ENCODE measurements at regions of chr9 and their contacts with region 1.

Region 1: DNA sequence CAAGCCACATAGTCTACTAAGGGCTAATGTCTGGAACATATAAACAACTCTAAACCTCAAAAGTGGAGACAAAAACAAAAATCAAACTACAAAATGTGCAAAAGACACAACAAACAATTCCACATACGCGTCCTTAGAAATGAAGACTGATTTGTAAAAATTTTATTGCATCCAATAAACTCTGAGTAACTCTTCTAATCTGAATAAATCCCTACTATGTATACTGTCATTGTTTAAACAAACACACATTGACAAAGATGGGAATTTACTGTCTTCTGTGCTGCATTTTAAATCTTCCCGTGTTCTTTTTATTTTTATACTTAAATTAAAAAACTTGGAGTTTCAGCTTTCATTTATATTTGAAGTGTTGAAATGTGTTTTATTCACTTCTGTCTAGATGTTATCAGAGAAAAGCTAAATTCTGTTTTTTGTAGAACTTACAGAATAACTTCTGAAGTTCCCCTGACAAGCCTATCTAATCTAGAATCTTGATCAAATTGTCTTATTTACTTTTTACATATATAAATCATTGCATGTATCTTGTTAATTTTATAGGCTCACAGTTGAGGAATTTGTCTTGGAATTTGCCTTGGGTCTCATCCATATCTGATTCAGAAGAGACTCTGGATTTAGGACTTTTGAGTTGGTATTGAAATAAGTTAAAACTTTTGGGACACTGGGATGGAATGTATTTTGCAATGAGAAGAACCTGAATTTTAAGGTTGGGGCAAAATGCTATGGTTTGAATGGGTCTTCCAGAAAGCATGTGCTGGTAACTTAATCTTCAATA is 2064.4 kb upstream of the C9orf72 start:
- DNase-seq: no peak
- ATAC-seq: no peak
- H3K4me3 ChIP-seq: no peak overlapping the region
- H3K27ac ChIP-seq: no peak overlapping the region
- H3K4me1 ChIP-seq: no peaks in the 10 kb centered on the region
- H3K27me3 ChIP-seq: no peaks in the 10 kb centered on the region
- CTCF ChIP-seq: no peak
- POLR2A ChIP-seq: no peak
- RAD21 ChIP-seq: no peak

Region 2: DNA sequence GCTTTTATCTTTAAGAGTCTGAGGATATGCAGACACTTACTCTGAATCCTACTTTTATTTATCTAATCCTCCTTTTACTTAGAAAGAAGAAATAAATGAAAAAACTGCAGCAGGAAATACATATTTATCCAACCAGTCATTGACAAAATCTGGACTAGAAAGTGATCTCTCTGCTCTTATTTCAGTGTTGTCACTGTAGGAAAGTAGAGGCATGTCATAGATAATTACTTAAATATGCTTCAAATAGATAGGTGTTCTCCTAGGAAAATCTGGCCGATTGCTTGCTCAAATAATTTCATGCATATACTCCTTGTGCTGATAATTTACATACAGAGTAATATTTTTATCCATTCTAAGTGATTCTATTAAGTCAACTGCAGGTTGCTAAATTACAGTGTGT is 62.4 kb before region 1 on chr9:
- CTCF ChIA-PET with region 1: no interaction called
- POLR2A ChIA-PET with region 1: no interaction called
- dilution Hi-C with region 1: no loop called
- in situ Hi-C with region 1: no loop called
- intact Hi-C with region 1: loop called (anchors 10 kb)
- DNase-seq: no peak
- ATAC-seq: no peak
- H3K4me3 ChIP-seq: no peak overlapping the region
- H3K27ac ChIP-seq: no peak overlapping the region
- H3K4me1 ChIP-seq: no peaks in the 10 kb centered on the region
- H3K27me3 ChIP-seq: no peaks in the 10 kb centered on the region
- CTCF ChIP-seq: no peak
- POLR2A ChIP-seq: no peak
- RAD21 ChIP-seq: no peak

Region 3: DNA sequence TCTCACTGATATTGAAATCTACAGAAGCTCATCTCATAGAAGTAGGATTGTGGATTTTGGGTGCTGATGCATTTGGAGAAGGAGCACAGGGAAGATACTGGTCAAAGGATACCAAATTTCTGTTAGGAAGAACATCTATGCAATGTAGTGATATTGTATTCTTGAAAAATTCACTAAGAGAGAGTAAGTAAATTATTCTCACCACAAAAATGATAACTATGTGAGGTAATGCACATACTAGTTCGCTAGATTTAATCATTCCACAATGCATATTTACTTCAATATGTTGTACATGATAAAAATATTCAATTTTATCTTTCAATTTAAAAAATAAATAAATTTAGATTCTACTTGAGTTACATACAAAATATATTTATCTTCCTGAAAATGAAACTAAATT is 23.9 kb before region 1 on chr9:
- CTCF ChIA-PET with region 1: no interaction called
- POLR2A ChIA-PET with region 1: no interaction called
- dilution Hi-C with region 1: no loop called
- in situ Hi-C with region 1: no loop called
- intact Hi-C with region 1: no loop called
- DNase-seq: no peak
- ATAC-seq: no peak
- H3K4me3 ChIP-seq: no peak overlapping the region
- H3K27ac ChIP-seq: no peak overlapping the region
- H3K4me1 ChIP-seq: no peaks in the 10 kb centered on the region
- H3K27me3 ChIP-seq: no peaks in the 10 kb centered on the region
- CTCF ChIP-seq: no peak
- POLR2A ChIP-seq: no peak
- RAD21 ChIP-seq: no peak

Region 4: DNA sequence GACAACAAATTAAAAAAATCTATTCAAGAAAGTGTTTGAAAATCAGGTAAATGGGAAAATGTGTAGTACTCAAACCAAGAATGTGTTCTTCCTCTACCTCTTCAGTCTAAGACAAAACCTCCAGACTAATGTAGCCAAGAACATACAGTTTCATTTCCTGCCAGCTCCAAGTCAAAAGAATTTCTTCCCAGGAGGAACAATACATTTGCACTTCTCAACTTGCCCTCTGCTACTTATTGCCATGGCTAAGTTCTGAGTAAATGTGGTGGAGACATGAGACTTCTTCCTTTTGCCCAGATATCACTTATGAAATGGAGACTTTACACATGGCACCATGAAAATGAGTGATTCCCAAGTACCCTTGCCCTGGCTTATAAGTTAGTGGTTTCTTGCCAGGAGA is 47.9 kb after region 1 on chr9:
- CTCF ChIA-PET with region 1: no interaction called
- POLR2A ChIA-PET with region 1: no interaction called
- dilution Hi-C with region 1: no loop called
- in situ Hi-C with region 1: no loop called
- intact Hi-C with region 1: loop called (anchors 10 kb)
- DNase-seq: no peak
- ATAC-seq: no peak
- H3K4me3 ChIP-seq: no peak overlapping the region
- H3K27ac ChIP-seq: no peak overlapping the region
- H3K4me1 ChIP-seq: no peaks in the 10 kb centered on the region
- H3K27me3 ChIP-seq: no peaks in the 10 kb centered on the region
- CTCF ChIP-seq: no peak
- POLR2A ChIP-seq: no peak
- RAD21 ChIP-seq: no peak

Region 5: DNA sequence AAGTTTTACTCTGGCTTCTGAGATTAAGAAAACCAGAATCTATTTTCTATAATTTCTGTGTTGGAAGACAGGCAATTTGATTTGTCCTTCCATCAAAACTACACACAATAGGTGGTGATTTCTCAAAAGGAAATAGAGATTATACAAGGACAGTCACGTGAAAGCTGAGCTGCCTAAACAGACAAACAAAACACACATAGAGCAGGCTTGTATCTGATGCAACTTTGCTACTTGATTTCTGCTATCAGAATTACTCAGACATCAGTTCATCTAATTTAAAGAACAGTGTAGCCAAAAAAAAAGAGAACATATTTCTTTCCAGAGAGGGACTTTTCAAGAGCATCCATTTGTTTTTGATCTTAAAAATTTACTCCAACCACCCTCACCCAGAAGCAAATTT is 63.9 kb after region 1 on chr9:
- CTCF ChIA-PET with region 1: no interaction called
- POLR2A ChIA-PET with region 1: no interaction called
- dilution Hi-C with region 1: no loop called
- in situ Hi-C with region 1: no loop called
- intact Hi-C with region 1: no loop called
- DNase-seq: no peak
- ATAC-seq: no peak
- H3K4me3 ChIP-seq: no peak overlapping the region
- H3K27ac ChIP-seq: no peak overlapping the region
- H3K4me1 ChIP-seq: no peaks in the 10 kb centered on the region
- H3K27me3 ChIP-seq: no peaks in the 10 kb centered on the region
- CTCF ChIP-seq: no peak
- POLR2A ChIP-seq: no peak
- RAD21 ChIP-seq: no peak

Measured in IMR-90 (cell line).